ENCODE measurements at regions of chr4 and their contacts with region 1.

Region 1: GRCh38 chr4:108433832-108434231 is 186.5 kb upstream of the RPL34 start:
- DNase-seq: peak; percentile 88
- H3K4me3 Mint-ChIP-seq: peak overlapping the region; percentile 54
- H3K27ac Mint-ChIP-seq: peak overlapping the region; percentile 75
- H3K4me1 Mint-ChIP-seq: peaks cover 33% of the 10 kb centered on the region
- H3K27me3 Mint-ChIP-seq: peaks cover 9% of the 10 kb centered on the region

Region 2: GRCh38 chr4:108109997-108110416 is 323.8 kb before region 1 on chr4:
- intact Hi-C with region 1: loop called (anchors 2 kb)
- DNase-seq: peak; percentile 57
- H3K4me3 Mint-ChIP-seq: peak overlapping the region; percentile 81
- H3K27ac Mint-ChIP-seq: peak overlapping the region; percentile 90
- H3K4me1 Mint-ChIP-seq: peaks cover 84% of the 10 kb centered on the region
- H3K27me3 Mint-ChIP-seq: no peaks in the 10 kb centered on the region

Region 3: GRCh38 chr4:108355186-108355901 is 78.5 kb before region 1 on chr4:
- intact Hi-C with region 1: loop called (anchors 5 kb)
- DNase-seq: peak; percentile 88
- H3K4me3 Mint-ChIP-seq: peak overlapping the region; percentile 71
- H3K27ac Mint-ChIP-seq: peak overlapping the region; percentile 26
- H3K4me1 Mint-ChIP-seq: peaks cover 49% of the 10 kb centered on the region
- H3K27me3 Mint-ChIP-seq: no peaks in the 10 kb centered on the region

Region 4: DNA sequence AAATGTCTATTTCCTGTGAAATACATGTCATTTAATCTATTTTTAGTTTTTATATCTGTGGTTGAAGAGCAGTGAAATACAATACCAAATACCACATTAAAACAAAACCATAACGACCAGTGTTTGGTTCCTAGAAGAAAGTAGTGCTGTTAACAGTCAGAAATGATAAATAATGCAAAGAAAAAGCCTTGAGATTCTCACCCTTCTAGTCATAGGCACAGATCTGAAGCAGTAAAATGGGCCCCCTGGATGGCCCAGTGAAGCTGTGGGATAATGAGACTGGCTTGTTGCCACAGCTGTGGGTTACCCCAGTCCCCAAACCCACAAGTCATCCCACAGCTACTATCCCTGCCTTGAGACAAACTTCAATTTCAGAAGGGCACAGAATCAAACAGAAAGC is 49.2 kb after region 1 on chr4:
- intact Hi-C with region 1: loop called (anchors 1 kb)
- DNase-seq: peak; percentile 82
- H3K4me3 Mint-ChIP-seq: peak overlapping the region; percentile 82
- H3K27ac Mint-ChIP-seq: peak overlapping the region; percentile 85
- H3K4me1 Mint-ChIP-seq: peaks cover 32% of the 10 kb centered on the region
- H3K27me3 Mint-ChIP-seq: no peaks in the 10 kb centered on the region

Region 5: GRCh38 chr4:108502356-108502755 is 68.5 kb after region 1 on chr4:
- intact Hi-C with region 1: no loop called
- DNase-seq: no peak
- H3K4me3 Mint-ChIP-seq: no peak overlapping the region
- H3K27ac Mint-ChIP-seq: no peak overlapping the region
- H3K4me1 Mint-ChIP-seq: peaks cover 6% of the 10 kb centered on the region
- H3K27me3 Mint-ChIP-seq: peaks cover 5% of the 10 kb centered on the region

Measured in activated CD4-positive, alpha-beta T cell treated with anti-CD3 and anti-CD28 coated beads, Interleukin-2, amount 10 ng/mL, durations not matched to agents 24 days and 14 days (primary cell).